ENCODE measurements at regions of chr13 and their contacts with region 1.

Region 1: DNA sequence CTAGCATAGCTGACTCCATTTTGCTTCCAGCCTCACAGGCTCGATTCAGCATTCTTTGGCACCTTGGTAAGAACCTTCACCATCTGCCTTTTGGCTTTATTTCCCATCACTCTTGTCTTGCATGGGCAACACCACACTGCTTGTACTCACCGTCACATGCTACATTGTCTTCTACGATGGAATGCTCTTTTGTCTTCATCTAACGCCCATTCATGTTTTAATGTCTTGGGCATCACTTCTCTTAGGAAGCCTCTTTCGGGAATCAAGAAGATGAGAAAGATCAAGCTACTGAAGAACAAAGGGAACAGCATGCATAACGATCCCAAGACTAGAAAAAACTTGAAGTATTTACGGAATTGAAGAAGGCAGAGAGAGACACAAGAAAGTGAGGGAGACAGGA is 5.7 kb upstream of the RPL21 start:
- DNase-seq: no peak
- ATAC-seq: no peak
- H3K4me3 ChIP-seq: no peak overlapping the region
- H3K4me3 Mint-ChIP-seq: no peak overlapping the region
- H3K27ac ChIP-seq: no peak overlapping the region
- H3K27ac Mint-ChIP-seq: peak overlapping the region; percentile 34
- H3K4me1 ChIP-seq: no peaks in the 10 kb centered on the region
- H3K4me1 Mint-ChIP-seq: peaks cover 22% of the 10 kb centered on the region
- H3K27me3 ChIP-seq: no peaks in the 10 kb centered on the region
- H3K27me3 Mint-ChIP-seq: no peaks in the 10 kb centered on the region
- CTCF ChIP-seq: no peak

Region 2: DNA sequence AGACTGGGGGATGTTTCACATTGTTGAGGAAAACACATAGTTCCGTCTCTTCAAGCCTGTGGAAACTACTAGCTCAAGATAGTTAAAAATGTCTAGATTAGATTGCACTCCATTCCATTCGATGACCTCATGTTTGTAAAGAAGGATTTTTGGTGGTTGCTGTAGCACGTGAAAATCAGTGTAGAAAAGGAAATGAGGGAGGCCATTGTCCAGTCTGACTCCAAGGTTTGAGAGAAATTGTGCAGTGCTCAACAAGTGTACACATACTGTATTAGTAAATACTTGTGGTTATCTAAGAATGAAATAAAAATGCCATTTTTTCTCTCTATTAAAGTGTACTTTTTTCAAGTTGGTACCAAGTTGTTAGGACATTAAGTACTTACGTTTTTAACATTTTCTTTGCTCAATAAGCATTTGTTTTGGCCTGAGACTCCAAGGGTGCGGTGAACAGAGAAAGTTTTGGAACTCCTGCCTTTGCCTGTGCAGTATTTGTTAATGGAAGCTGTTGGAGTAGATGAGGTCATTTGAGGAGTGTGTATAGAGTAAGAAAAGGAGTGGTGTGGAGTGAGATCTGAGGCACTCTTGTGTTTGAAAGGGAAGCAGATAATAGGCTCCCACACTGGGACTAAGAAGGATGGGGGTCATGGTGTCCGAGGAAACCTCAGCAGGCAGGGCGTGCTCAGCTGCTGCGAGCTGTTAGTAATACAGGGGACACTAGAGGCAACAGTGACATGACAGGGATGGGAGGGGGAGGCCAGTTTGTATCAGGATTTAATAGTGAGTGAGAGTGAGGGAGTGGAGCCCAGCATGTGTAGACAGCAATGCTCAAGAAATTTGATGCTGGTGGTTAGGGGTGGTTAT is 683.7 kb before region 1 on chr13:
- CTCF ChIA-PET with region 1: no interaction called
- POLR2A ChIA-PET with region 1: no interaction called
- intact Hi-C with region 1: no loop called
- DNase-seq: no peak
- ATAC-seq: no peak
- H3K4me3 ChIP-seq: no peak overlapping the region
- H3K4me3 Mint-ChIP-seq: no peak overlapping the region
- H3K27ac ChIP-seq: no peak overlapping the region
- H3K27ac Mint-ChIP-seq: no peak overlapping the region
- H3K4me1 ChIP-seq: peaks cover 4% of the 10 kb centered on the region
- H3K4me1 Mint-ChIP-seq: peaks cover 14% of the 10 kb centered on the region
- H3K27me3 ChIP-seq: peaks cover 22 to 55% of the 10 kb centered on the region in 2 experiments
- H3K27me3 Mint-ChIP-seq: peaks cover 46% of the 10 kb centered on the region
- CTCF ChIP-seq: no peak

Region 3: DNA sequence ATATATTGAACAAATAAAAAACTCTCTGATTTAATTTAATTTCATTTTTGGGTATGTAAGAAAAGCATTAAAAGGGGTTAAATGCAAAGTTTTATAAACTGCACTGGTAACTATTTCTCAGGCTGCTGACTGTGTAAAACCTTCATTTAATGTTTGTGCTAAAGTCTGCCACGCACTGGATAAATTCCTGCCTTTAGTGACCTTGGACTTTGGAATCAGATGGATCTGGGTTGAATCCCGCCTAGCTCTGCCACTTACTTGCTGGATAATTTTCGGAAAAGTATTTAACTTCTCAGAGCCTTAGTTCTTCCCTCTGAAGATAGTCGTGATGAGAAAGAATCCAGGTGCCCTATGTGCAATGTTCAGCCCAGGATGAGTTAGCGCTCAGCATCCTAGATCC is 83.6 kb after region 1 on chr13:
- CTCF ChIA-PET with region 1: no interaction called
- POLR2A ChIA-PET with region 1: no interaction called
- intact Hi-C with region 1: no loop called
- DNase-seq: no peak
- ATAC-seq: no peak
- H3K4me3 ChIP-seq: no peak overlapping the region
- H3K4me3 Mint-ChIP-seq: no peak overlapping the region
- H3K27ac ChIP-seq: no peak overlapping the region
- H3K27ac Mint-ChIP-seq: no peak overlapping the region
- H3K4me1 ChIP-seq: no peaks in the 10 kb centered on the region
- H3K4me1 Mint-ChIP-seq: no peaks in the 10 kb centered on the region
- H3K27me3 ChIP-seq: peaks cover 0 to 2% of the 10 kb centered on the region in 2 experiments
- H3K27me3 Mint-ChIP-seq: peaks cover 11% of the 10 kb centered on the region
- CTCF ChIP-seq: no peak

Region 4: GRCh38 chr13:27415116-27415515 is 169.5 kb after region 1 on chr13:
- CTCF ChIA-PET with region 1: no interaction called
- POLR2A ChIA-PET with region 1: no interaction called
- intact Hi-C with region 1: loop called (anchors 5 to 10 kb)
- DNase-seq: no peak
- ATAC-seq: no peak
- H3K4me3 ChIP-seq: no peak overlapping the region
- H3K4me3 Mint-ChIP-seq: no peak overlapping the region
- H3K27ac ChIP-seq: no peak overlapping the region
- H3K27ac Mint-ChIP-seq: no peak overlapping the region
- H3K4me1 ChIP-seq: no peaks in the 10 kb centered on the region
- H3K4me1 Mint-ChIP-seq: no peaks in the 10 kb centered on the region
- H3K27me3 ChIP-seq: peaks cover 0 to 2% of the 10 kb centered on the region in 2 experiments
- H3K27me3 Mint-ChIP-seq: no peaks in the 10 kb centered on the region
- CTCF ChIP-seq: no peak

Measured in CD4-positive, alpha-beta T cell (primary cell).